ENCODE measurements at regions of chr6 and their contacts with region 1.

Region 1: GRCh38 chr6:110528101-110528929 is 51.9 kb upstream of the SLC22A16 start:
- DNase-seq: peak; percentile 97
- H3K4me3 ChIP-seq: no peak overlapping the region
- H3K27ac ChIP-seq: peak overlapping the region; percentile 96
- H3K4me1 ChIP-seq: peaks cover 40% of the 10 kb centered on the region
- H3K27me3 ChIP-seq: no peaks in the 10 kb centered on the region
- CTCF ChIP-seq: peak; percentile 71 to 81

Region 2: GRCh38 chr6:110625883-110626282 is 97.6 kb after region 1 on chr6:
- CTCF ChIA-PET with region 1: no interaction called
- dilution Hi-C with region 1: no loop called
- in situ Hi-C with region 1: no loop called
- intact Hi-C with region 1: loop called (anchors 2 kb)
- DNase-seq: peak; percentile 74
- H3K4me3 ChIP-seq: no peak overlapping the region
- H3K27ac ChIP-seq: no peak overlapping the region
- H3K4me1 ChIP-seq: peaks cover 26% of the 10 kb centered on the region
- H3K27me3 ChIP-seq: no peaks in the 10 kb centered on the region
- CTCF ChIP-seq: no peak

Region 3: DNA sequence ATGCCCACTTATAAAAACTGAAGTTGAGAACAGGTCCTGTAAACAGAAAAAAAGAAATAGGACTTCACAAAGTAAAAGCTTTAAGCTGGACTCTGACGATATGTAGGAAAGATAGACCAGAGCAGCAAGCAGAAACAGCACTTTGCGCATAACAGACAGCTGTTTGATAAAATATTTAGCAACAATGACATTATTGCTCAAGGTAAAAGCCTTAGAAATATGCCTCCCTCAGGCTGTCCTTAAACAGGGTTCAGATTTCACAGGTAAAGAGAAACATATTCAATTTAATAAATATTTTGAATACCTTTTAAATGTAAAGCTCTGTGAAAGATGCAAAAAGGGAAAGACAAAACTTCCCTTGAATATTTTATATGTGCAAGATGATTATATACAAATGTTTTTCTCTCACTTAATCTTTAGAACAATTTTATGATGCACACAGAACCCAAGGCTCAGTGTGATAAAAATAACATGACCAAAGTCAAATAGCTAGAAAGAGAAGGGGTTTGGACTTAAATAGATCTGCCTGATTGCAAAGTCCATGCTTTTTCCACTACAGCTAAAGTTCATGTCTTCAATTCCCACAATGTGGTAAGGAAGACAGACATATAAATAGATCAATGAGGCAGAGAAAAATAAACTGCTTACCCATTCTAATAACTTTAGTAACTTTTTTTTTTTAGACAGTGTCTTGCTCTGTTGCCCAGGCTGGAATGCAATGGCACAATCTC is 143.0 kb after region 1 on chr6:
- CTCF ChIA-PET with region 1: interaction called, 5 read pairs
- dilution Hi-C with region 1: no loop called
- in situ Hi-C with region 1: loop called in 1 of 2 experiments (anchors 10 kb)
- intact Hi-C with region 1: no loop called
- DNase-seq: no peak
- H3K4me3 ChIP-seq: no peak overlapping the region
- H3K27ac ChIP-seq: no peak overlapping the region
- H3K4me1 ChIP-seq: no peaks in the 10 kb centered on the region
- H3K27me3 ChIP-seq: no peaks in the 10 kb centered on the region
- CTCF ChIP-seq: no peak

Region 4: DNA sequence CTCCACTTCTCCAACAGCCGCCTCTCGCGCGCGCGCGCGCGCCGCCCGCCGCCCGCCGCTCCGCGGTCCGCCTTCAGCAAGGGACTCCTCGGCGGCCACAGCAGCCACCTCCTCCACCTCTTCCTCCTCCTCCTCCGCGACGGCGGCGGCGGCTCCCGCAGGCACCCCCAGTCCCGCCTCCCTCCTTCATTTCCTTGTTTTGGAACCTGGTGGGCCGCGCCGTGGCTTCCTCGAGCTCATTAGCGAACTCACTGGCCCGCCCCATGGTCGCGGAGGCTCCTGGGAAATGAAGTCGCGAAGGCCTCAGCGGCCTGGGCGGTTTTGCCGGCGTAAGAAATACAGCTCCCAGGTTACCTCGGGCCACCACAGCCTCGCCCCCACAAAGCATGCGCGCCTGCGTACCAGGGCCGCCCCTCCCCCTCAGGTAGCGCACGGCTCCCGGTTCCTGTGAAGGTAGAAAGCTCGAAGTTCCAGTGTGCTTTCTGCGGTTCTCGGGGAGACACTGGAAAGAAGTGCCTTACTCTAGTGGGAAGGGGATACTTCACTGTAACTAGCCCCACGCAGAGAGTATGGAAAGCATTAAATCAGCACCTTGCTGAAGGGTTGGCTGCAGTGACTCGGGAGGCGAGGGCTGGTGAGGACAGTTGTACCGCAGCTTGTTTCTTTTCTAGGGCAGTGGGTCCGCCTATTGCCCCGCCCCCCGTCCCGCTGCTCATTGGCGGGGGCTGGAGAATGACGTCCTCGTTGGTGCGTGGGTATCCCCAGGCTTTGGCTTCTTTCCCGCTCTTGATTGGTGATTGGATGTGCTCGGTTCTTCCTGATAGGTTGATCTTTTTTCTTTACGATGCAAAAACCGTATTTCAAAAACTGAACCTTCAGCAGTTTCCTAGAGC is 287.1 kb after region 1 on chr6 and contains the start of gene CDK19:
- CTCF ChIA-PET with region 1: no interaction called
- dilution Hi-C with region 1: no loop called
- in situ Hi-C with region 1: no loop called
- intact Hi-C with region 1: loop called (anchors 1 kb)
- DNase-seq: peak; percentile 99
- H3K4me3 ChIP-seq: peak within 1 kb of the TSS; percentile 66 to 97 (median 93)
- H3K27ac ChIP-seq: peak within 1 kb of the TSS; percentile 95
- H3K4me1 ChIP-seq: peaks cover 22% of the 10 kb centered on the region
- H3K27me3 ChIP-seq: no peaks in the 10 kb centered on the region
- CTCF ChIP-seq: no peak
- total RNA-seq, gene CDK19: 8.7 to 8.8 TPM

Region 5: GRCh38 chr6:110949679-110950285 is 421.5 kb after region 1 on chr6:
- CTCF ChIA-PET with region 1: interaction called, 9 read pairs
- dilution Hi-C with region 1: loop called (anchors 10 kb)
- in situ Hi-C with region 1: no loop called
- intact Hi-C with region 1: loop called (anchors 1 kb)
- DNase-seq: no peak
- H3K4me3 ChIP-seq: no peak overlapping the region
- H3K27ac ChIP-seq: no peak overlapping the region
- H3K4me1 ChIP-seq: peaks cover 22% of the 10 kb centered on the region
- H3K27me3 ChIP-seq: no peaks in the 10 kb centered on the region
- CTCF ChIP-seq: peak; percentile 37 to 51

Region 6: GRCh38 chr6:110999634-111000270 is 471.4 kb after region 1 on chr6:
- CTCF ChIA-PET with region 1: no interaction called
- dilution Hi-C with region 1: no loop called
- in situ Hi-C with region 1: loop called in 1 of 2 experiments (anchors 5 kb)
- intact Hi-C with region 1: loop called (anchors 1 kb)
- DNase-seq: peak; percentile 16
- H3K4me3 ChIP-seq: no peak overlapping the region
- H3K27ac ChIP-seq: no peak overlapping the region
- H3K4me1 ChIP-seq: no peaks in the 10 kb centered on the region
- H3K27me3 ChIP-seq: no peaks in the 10 kb centered on the region
- CTCF ChIP-seq: peak; percentile 21 to 48